Activated CD8-positive, alpha-beta T cell treated with anti-CD3 and anti-CD28 coated beads, Interleukin-2, amount 10 ng/mL, durations not matched to agents 7 days and 5 days (primary cell): ENCODE measurements at regions of chr5 and their contacts with region 1.

Region 1: GRCh38 chr5:123545506-123545905 is 33.5 kb downstream of the CSNK1G3 start:
- DNase-seq: peak; percentile 30
- ATAC-seq: no peak
- H3K4me3 Mint-ChIP-seq: no peak overlapping the region
- H3K27ac Mint-ChIP-seq: no peak overlapping the region
- H3K4me1 Mint-ChIP-seq: peaks cover 41% of the 10 kb centered on the region
- H3K27me3 Mint-ChIP-seq: no peaks in the 10 kb centered on the region

Region 2: DNA sequence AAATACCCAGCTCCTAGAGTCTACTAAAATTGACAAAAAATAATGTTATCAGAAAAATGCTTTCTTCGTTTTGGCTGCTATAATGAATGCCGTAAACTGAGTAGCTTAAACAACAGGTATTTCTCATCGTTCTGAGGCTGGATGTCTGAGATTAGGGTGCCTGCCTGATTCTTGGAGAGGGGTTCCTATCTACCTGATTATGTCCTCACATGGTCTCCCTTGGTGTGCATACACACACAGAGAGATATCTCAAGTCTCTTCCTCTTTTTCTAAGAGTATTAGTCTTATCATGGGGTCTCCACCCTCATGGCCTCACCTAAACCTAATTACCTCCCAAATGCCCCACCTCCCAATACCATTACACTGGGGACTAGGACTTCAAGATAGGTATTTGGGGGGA is 74.1 kb before region 1 on chr5:
- CTCF ChIA-PET with region 1: no interaction called
- POLR2A ChIA-PET with region 1: no interaction called
- DNase-seq: no peak
- ATAC-seq: no peak
- H3K4me3 Mint-ChIP-seq: no peak overlapping the region
- H3K27ac Mint-ChIP-seq: no peak overlapping the region
- H3K4me1 Mint-ChIP-seq: no peaks in the 10 kb centered on the region
- H3K27me3 Mint-ChIP-seq: peaks cover 23% of the 10 kb centered on the region

Region 3: DNA sequence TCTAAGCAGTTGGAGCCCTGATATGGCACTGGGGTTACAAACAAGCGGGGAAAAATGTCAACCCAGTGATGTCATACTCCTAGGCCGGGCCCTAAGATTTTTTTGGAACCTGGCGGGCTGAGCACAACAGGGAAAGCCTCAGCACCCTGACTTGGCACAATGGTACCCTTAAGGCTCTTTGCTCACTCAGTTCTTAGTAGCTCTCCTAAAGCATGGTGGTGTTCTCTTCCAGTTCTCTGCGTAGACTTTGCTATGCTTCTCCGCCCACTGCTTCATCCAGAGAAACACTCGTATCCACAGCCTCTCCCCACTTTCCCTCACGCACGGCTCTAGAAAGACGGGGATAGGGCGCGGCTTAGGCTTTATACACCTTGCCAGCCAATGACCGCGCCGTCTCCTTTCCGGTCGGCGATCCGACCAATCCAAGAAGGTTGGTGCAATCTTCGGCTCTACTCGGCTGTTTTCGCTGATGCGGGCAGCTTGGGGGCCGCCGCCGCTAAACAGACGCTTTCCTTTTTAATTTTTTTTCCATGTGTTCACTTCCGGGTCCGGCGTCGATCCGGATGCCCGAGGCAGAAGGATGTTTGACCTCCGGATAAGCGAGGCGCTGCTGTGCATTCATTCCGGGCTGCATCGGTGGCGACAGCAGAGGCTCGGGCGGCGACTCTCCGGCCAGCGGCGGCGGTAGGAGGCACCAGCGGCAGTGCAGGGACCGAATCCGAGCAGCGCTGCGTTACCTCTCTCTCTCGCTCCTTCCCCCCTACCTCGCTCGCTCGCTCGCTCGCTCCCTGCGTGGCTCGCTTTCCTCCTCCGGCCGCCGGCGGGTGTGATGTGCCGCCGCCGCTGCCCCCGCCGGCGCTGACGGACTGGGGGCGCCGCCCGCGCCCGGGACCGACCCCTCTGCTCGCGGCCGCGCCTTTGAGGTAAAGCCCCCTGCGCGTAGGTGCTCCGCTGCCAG is 33.6 kb before region 1 on chr5 and contains the start of gene CSNK1G3:
- CTCF ChIA-PET with region 1: interaction called, 5 read pairs
- POLR2A ChIA-PET with region 1: interaction called, 27 read pairs
- DNase-seq: peak; percentile 96
- ATAC-seq: peak; percentile 93
- H3K4me3 Mint-ChIP-seq: peak within 1 kb of the TSS; percentile 97
- H3K27ac Mint-ChIP-seq: peak within 1 kb of the TSS; percentile 99
- H3K4me1 Mint-ChIP-seq: peaks cover 46% of the 10 kb centered on the region
- H3K27me3 Mint-ChIP-seq: peaks cover 14% of the 10 kb centered on the region
- total RNA-seq, gene CSNK1G3: 26.9 to 28.6 TPM

Region 4: DNA sequence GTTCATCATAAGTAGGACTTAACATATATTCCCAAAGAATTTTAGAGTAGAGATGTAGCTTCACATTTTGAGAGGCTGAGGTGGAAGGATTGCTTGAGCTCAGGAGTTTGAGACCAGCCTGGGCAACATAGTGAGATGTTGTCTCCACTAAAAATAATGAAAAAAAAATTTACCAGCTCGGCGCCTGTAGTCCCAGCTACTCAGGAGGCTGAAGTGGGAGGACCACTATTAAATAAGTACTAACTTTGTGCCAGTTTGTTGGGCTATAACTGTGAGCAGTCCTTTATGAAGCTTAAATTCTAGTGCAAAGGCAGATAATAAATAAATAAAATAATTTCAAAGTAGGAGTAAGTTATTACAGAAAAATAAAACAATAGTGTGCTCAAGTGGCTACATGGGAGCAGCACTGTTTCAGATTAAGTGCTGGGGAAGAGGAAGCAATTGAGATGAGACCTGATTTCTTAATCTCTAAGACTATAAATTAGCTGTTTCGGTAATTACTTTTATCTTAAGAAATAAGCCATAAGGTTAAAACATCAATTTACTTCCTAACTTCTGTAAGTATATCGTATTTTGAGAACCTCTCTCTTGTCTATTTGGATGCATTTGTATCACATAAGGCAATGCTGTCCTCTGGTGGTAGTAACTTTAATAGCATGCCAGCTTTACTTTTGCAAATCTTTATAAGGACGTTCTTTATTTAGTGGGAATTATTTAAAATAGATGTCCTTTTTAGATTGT is 65.3 kb after region 1 on chr5:
- CTCF ChIA-PET with region 1: interaction called, 10 read pairs
- POLR2A ChIA-PET with region 1: no interaction called
- DNase-seq: peak; percentile 50
- ATAC-seq: peak; percentile 57
- H3K4me3 Mint-ChIP-seq: no peak overlapping the region
- H3K27ac Mint-ChIP-seq: no peak overlapping the region
- H3K4me1 Mint-ChIP-seq: peaks cover 5% of the 10 kb centered on the region
- H3K27me3 Mint-ChIP-seq: no peaks in the 10 kb centered on the region

Region 5: DNA sequence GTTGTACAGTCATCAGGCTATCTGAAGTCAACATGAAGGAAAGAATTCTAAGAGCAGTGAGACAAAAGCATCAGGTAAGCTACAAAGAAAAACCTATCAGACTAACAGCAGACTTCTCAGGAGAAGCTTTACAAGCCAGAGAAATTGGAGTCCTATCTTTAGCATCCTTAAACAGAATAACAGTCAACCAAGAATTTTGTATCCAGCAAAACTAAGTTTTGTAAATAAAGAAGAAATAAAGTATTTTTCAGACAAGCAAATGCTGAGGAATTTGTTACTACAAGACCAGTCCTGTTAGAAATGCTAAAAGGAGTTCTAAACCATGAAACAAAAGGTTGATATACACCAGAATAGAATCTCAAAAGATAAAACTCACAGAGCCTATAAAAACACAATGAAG is 699.8 kb after region 1 on chr5:
- CTCF ChIA-PET with region 1: no interaction called
- POLR2A ChIA-PET with region 1: no interaction called
- DNase-seq: no peak
- ATAC-seq: no peak
- H3K4me3 Mint-ChIP-seq: no peak overlapping the region
- H3K27ac Mint-ChIP-seq: no peak overlapping the region
- H3K4me1 Mint-ChIP-seq: no peaks in the 10 kb centered on the region
- H3K27me3 Mint-ChIP-seq: no peaks in the 10 kb centered on the region